CD14-positive monocyte (primary cell): ENCODE measurements at regions of chr20 and their contacts with region 1.

Region 1: GRCh38 chr20:59705651-59706399 is 101.5 kb downstream of the PHACTR3 start:
- DNase-seq: no peak
- H3K4me3 ChIP-seq: no peak overlapping the region
- H3K4me3 Mint-ChIP-seq: peak overlapping the region in 1 of 2 donors; percentile 31
- H3K27ac ChIP-seq: no peak overlapping the region
- H3K27ac Mint-ChIP-seq: no peak overlapping the region
- H3K4me1 ChIP-seq: no peaks in the 10 kb centered on the region
- H3K4me1 Mint-ChIP-seq: no peaks in the 10 kb centered on the region
- H3K27me3 ChIP-seq: peaks cover 45 to 60% of the 10 kb centered on the region in 2 donors
- H3K27me3 Mint-ChIP-seq: peaks cover 38 to 76% (median 46%) of the 10 kb centered on the region in 3 donors
- CTCF ChIP-seq: no peak

Region 2: GRCh38 chr20:59743767-59744485 is 38.1 kb after region 1 on chr20:
- intact Hi-C with region 1: loop called in 1 of 2 experiments (anchors 5 kb)
- DNase-seq: no peak
- H3K4me3 ChIP-seq: no peak overlapping the region
- H3K4me3 Mint-ChIP-seq: no peak overlapping the region
- H3K27ac ChIP-seq: no peak overlapping the region
- H3K27ac Mint-ChIP-seq: no peak overlapping the region
- H3K4me1 ChIP-seq: peaks cover 0 to 3% of the 10 kb centered on the region in 2 donors
- H3K4me1 Mint-ChIP-seq: peaks cover 5% of the 10 kb centered on the region
- H3K27me3 ChIP-seq: peaks cover 0 to 48% of the 10 kb centered on the region in 2 donors
- H3K27me3 Mint-ChIP-seq: peaks cover 51 to 67% (median 55%) of the 10 kb centered on the region in 3 donors
- CTCF ChIP-seq: no peak